Ovary (tissue), 10 donors: ENCODE measurements at regions of chr5 and their contacts with region 1.

Region 1: GRCh38 chr5:43134019-43134418 is 13.3 kb downstream of the ZNF131 start:
- DNase-seq: no peak
- H3K4me3 ChIP-seq: no peak overlapping the region
- H3K27ac ChIP-seq: no peak overlapping the region
- H3K4me1 ChIP-seq: no peaks in the 10 kb centered on the region
- H3K27me3 ChIP-seq: no peaks in the 10 kb centered on the region
- CTCF ChIP-seq: no peak
- EP300 ChIP-seq: no peak
- POLR2A ChIP-seq: no peak

Region 2: DNA sequence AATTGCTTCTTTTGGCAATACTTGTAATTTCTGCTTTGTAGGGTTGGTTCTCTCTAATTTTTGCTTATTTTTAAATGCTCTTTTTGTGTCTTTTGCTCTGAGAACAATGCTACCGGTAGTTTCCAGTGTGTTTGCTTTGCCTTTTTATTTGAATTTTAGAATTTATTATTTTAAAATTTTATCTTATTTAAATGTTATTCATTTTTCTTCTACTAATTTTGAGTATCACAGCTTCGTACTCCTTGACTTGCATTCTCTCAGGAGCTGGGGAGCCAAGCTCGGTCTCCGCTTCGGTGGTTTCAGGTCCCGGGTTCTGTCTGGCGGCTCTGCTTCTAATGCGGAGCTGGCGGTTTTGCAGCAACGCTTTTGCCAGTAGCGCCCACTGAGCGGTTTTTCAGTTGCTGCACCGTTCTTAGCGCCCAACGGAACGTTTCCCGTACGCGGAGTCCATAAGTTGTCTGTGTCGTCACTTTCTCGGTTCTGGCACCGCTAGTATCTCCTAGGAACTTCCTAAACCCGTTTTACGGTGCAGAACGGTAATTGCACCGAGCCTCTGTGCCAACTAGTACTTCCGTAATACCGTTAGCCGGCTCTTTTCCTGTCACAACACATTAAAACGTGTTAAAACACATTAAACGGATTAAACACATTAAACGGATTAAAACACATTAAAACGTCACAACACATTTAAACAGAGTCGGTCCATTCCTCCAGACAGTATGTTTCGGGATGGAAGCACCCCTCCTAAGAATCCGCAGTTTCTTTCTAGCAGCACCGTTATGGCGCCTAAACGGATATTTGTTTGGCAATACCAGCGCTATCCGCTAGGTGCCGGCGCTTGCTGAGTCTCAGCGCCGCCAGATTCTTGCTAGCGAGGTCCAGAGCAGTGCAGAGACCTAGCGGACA is 139.5 kb before region 1 on chr5:
- intact Hi-C with region 1: no loop called
- DNase-seq: peak; percentile 80 to 88 (median 82)
- H3K4me3 ChIP-seq: peak overlapping the region; percentile 21
- H3K27ac ChIP-seq: peak overlapping the region in 1 of 2 donors; percentile 8
- H3K4me1 ChIP-seq: peaks cover 6% of the 10 kb centered on the region
- H3K27me3 ChIP-seq: no peaks in the 10 kb centered on the region
- CTCF ChIP-seq: peak; percentile 70 to 79 (median 76)
- EP300 ChIP-seq: no peak
- POLR2A ChIP-seq: no peak

Region 3: DNA sequence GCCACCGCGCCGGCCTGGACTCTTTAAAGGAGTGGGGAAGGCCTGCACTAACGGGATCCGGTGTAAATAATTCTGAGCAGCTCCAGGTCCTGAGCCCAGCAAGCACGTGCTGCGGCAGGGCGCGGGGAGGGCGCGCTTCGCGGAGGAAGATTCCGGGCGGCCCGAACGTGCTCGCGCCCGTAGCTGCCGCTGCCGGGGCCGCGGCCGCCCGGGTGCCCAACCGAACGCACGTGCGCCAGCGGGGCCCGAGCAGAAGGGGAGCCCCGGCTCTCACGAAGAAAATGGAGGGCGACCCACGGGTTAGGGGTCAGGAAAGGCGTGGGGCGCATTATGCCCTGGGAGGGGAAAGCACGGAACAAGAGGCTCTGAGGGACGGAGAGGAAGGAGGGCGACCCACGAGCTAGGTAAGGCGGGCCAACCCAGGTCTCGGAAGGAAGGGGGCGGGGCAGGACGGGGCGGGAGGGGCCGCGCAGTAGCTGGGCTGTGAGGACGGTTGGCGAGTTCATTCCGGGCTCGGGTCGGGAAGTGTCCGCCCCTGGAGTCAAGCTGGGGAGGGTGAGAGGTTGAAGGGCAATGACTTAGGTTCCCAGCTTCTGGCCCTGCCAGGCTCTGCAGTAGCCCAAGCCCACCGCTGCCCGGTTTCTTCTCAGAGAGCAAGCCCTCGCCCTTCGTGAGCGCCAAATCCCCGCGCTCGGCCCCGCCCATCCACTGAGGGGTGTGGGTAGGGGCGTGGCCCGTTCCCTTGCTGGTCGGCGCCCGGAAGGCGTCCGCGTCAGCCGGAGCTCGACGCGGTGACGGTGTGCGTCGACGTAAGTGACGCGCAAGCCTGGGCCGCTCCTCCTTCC is 13.1 kb before region 1 on chr5 and contains the start of gene ZNF131:
- intact Hi-C with region 1: no loop called
- DNase-seq: peak; percentile 95 to 98 (median 97)
- H3K4me3 ChIP-seq: peak within 1 kb of the TSS; percentile 93
- H3K27ac ChIP-seq: peak within 1 kb of the TSS; percentile 97 to 99
- H3K4me1 ChIP-seq: peaks cover 1% of the 10 kb centered on the region
- H3K27me3 ChIP-seq: no peaks in the 10 kb centered on the region
- CTCF ChIP-seq: peak in 1 of 3 donors; percentile 5
- EP300 ChIP-seq: no peak
- POLR2A ChIP-seq: peak; percentile 63
- total RNA-seq, gene ZNF131: 25.6 to 50.2 (median 37.3) TPM

Region 4: DNA sequence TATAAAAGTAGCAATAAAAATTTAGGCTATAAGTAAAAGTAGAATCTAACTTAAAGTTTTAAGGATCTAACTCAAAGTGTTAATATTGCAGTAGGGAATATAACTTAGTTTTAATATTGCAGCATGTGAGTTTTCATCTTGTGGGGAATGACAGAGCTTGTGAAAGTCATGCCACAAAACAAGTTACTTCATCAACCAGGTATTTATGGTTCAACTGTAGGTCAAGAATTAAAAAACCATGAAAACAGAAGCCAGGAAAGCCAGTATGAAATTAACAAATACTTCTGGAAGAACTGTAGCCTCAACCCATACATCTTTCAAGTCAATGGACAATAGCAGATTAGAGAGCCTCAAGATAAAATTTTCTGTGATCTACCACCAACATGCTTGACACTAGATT is 160.2 kb after region 1 on chr5:
- intact Hi-C with region 1: loop called in 1 of 4 experiments (anchors 5 kb)
- DNase-seq: no peak
- H3K4me3 ChIP-seq: no peak overlapping the region
- H3K27ac ChIP-seq: no peak overlapping the region
- H3K4me1 ChIP-seq: no peaks in the 10 kb centered on the region
- H3K27me3 ChIP-seq: no peaks in the 10 kb centered on the region
- CTCF ChIP-seq: no peak
- EP300 ChIP-seq: no peak
- POLR2A ChIP-seq: no peak